Naive thymus-derived CD4-positive, alpha-beta T cell (primary cell): ENCODE measurements at regions of chr21 and their contacts with region 1.

Region 1: GRCh38 chr21:36927719-36928117 is 38.8 kb downstream of the HLCS start:
- DNase-seq: peak; percentile 19 to 71 (median 60)
- ATAC-seq: peak; percentile 61
- H3K4me3 ChIP-seq: no peak overlapping the region
- H3K4me3 Mint-ChIP-seq: no peak overlapping the region
- H3K27ac ChIP-seq: no peak overlapping the region
- H3K27ac Mint-ChIP-seq: no peak overlapping the region
- H3K4me1 ChIP-seq: no peaks in the 10 kb centered on the region
- H3K4me1 Mint-ChIP-seq: peaks cover 0 to 17% (median 11%) of the 10 kb centered on the region in 7 donors
- H3K27me3 ChIP-seq: no peaks in the 10 kb centered on the region
- H3K27me3 Mint-ChIP-seq: no peaks in the 10 kb centered on the region

Region 2: DNA sequence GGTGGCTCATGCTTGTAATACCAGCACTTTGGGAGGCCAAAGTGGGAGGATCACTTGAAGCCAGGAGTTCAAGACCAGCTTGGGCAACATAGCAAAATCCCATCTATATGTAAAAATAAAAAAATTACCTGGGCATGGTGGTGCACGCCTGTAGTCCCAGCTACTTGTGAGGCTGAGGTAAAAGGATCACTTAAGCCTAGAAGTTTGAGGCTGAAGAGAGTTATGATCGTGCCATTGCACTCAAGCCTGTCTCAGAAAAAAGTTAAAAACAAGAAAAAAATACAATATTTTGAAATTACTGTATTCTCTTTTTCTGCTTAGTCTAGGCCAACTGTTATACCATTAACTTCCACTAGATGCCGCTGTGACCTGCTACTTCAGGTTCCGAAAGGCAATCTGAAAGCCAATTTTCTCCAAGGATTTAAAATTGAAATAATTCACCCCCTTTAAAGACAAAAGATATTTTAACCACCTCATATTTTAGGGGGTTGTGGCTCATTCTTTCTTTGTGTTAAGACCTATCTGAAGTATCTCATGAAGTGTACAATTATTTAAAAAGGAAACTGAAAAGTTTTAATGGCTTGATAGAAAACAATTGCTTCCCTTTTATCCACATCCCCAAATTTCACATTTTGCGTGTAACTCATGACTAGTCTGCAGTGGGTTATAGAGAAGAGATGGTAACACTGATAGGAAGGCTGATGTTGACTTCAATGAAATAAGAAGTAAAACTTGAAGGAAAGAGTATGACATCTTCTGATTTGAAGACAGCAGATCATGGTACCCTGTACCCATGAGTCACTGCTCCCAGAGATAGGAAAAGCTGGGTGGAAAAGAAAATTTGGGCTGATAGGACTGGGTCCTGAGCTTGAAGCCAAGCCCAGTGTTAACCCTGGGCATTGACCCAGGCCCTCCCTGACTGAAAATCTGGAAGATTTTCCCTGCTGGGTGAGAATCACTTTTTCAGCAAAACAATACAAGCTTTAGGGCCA is 423.4 kb before region 1 on chr21:
- CTCF ChIA-PET with region 1: interaction called, 33 read pairs
- POLR2A ChIA-PET with region 1: no interaction called
- intact Hi-C with region 1: loop called in 1 of 2 experiments (anchors 1 kb)
- DNase-seq: peak in 7 of 9 donors; percentile 8 to 56 (median 40)
- ATAC-seq: peak; percentile 46
- H3K4me3 ChIP-seq: no peak overlapping the region
- H3K4me3 Mint-ChIP-seq: no peak overlapping the region
- H3K27ac ChIP-seq: no peak overlapping the region
- H3K27ac Mint-ChIP-seq: no peak overlapping the region
- H3K4me1 ChIP-seq: no peaks in the 10 kb centered on the region
- H3K4me1 Mint-ChIP-seq: no peaks in the 10 kb centered on the region
- H3K27me3 ChIP-seq: no peaks in the 10 kb centered on the region
- H3K27me3 Mint-ChIP-seq: peaks cover 0 to 17% (median 10%) of the 10 kb centered on the region in 5 donors

Region 3: DNA sequence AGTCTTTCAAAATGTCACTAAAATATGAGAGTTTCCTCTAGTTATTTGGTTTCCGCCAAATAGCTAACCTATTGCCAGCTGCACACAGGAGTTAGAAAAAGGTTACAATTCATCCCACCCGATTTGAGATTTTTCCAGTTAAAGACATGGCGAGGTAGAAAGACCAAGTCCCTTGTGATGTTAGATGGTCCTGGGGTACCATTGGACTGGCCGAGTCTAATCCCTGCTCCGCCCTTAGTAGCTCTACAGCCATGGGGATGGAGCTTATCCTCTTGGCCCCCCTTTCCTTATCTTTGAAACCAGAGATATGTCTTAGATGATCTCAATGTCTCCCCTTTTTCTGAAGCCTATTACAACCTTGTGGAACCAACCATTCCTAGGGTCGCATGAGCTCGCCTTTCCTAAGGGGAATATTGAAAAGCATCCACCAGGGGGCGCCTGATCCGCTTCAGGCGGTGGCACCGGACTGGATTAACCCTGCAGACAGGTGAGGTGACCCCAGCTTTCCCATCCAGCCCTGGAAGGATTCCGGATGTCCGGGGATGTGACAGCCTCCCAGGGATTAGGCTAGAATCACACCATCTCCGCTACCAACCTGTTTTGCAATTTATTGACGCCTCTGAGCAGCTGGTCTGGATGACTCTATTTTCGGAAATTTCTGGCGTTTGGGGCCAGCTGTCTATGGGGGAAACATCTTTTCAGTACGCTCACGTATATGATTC is 297.1 kb before region 1 on chr21:
- CTCF ChIA-PET with region 1: interaction called, 4 read pairs
- POLR2A ChIA-PET with region 1: no interaction called
- intact Hi-C with region 1: loop called in 1 of 2 experiments (anchors 1 kb)
- DNase-seq: peak in 8 of 9 donors; percentile 14 to 57 (median 41)
- ATAC-seq: peak; percentile 54
- H3K4me3 ChIP-seq: no peak overlapping the region
- H3K4me3 Mint-ChIP-seq: no peak overlapping the region
- H3K27ac ChIP-seq: no peak overlapping the region
- H3K27ac Mint-ChIP-seq: no peak overlapping the region
- H3K4me1 ChIP-seq: no peaks in the 10 kb centered on the region
- H3K4me1 Mint-ChIP-seq: no peaks in the 10 kb centered on the region
- H3K27me3 ChIP-seq: no peaks in the 10 kb centered on the region
- H3K27me3 Mint-ChIP-seq: peaks cover 0 to 6% (median 3%) of the 10 kb centered on the region in 5 donors

Region 4: DNA sequence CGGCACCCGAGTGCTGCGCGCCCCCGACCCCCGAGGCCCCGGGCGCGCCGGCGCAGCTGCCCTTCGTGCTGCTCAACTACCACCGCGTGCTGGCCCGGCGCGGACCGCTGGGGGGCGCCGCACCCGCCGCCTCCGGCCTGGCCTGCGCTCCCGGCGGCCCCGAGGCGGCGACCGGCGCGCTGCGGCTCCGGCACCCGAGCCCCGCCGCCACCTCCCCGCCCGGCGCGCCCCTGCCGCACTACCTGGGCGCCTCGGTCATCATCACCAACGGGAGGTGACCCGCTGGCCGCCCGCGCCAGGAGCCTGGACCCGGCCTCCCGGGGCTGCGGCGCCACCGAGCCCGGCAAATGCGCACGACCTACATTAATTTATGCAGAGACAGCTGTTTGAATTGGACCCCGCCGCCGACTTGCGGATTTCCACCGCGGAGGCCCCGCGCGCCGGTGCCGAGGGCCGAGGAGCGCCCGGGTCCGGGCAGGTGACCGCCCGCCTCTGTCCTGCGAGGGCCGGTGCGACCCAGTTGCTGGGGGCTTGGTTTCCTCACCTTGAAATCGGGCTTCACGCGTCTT is 179.8 kb before region 1 on chr21:
- CTCF ChIA-PET with region 1: no interaction called
- POLR2A ChIA-PET with region 1: no interaction called
- intact Hi-C with region 1: loop called in 1 of 2 experiments (anchors 2 kb)
- DNase-seq: peak in 3 of 9 donors; percentile 10 to 59 (median 10)
- ATAC-seq: peak; percentile 49
- H3K4me3 ChIP-seq: no peak overlapping the region
- H3K4me3 Mint-ChIP-seq: peak overlapping the region in 9 of 10 donors; percentile 21 to 81 (median 57)
- H3K27ac ChIP-seq: no peak overlapping the region
- H3K27ac Mint-ChIP-seq: no peak overlapping the region
- H3K4me1 ChIP-seq: no peaks in the 10 kb centered on the region
- H3K4me1 Mint-ChIP-seq: peaks cover 9 to 23% (median 17%) of the 10 kb centered on the region in 7 donors
- H3K27me3 ChIP-seq: no peaks in the 10 kb centered on the region
- H3K27me3 Mint-ChIP-seq: peaks cover 45 to 69% (median 56%) of the 10 kb centered on the region in 5 donors